ENCODE measurements at regions of chr3 and their contacts with region 1.

Region 1: DNA sequence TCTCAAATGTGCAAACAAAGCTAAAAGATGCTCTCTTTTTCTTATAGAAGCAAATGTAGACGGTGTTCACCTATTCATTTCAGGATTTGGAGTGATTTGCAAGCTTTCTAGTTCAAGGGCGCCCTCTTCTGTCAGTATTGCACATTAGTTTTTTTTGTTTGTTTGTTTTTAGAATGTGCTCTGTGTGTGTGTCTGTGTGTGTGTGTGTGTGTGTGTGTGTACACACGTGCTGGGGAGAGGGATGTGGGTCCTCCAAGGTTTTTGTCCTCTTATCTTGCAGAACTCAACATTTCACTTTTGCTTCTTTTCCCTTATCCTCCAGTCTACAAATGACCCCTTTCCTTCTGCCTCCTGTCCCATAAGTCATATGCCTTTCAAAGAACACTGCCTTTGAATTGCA is 23.5 kb downstream of the DNAH1 start:
- DNase-seq: peak; percentile 38 to 77 (median 41)
- ATAC-seq: peak; percentile 64
- H3K4me3 ChIP-seq: no peak overlapping the region
- H3K27ac ChIP-seq: no peak overlapping the region
- H3K4me1 ChIP-seq: no peaks in the 10 kb centered on the region
- H3K27me3 ChIP-seq: no peaks in the 10 kb centered on the region
- CTCF ChIP-seq: peak; percentile 56 to 79 (median 66); a peak in 5 of 6 replicates
- EP300 ChIP-seq: no peak
- POLR2A ChIP-seq: no peak
- RAD21 ChIP-seq: peak; percentile 93 to 95

Region 2: GRCh38 chr3:52231502-52232293 is 107.9 kb before region 1 on chr3:
- CTCF ChIA-PET with region 1: interaction called, 18 read pairs
- POLR2A ChIA-PET with region 1: interaction called, 5 read pairs
- in situ Hi-C with region 1: no loop called
- intact Hi-C with region 1: loop called (anchors 5 kb)
- DNase-seq: peak; percentile 64 to 72 (median 72)
- ATAC-seq: peak; percentile 82
- H3K4me3 ChIP-seq: no peak overlapping the region
- H3K27ac ChIP-seq: no peak overlapping the region
- H3K4me1 ChIP-seq: peaks cover 2 to 45% of the 10 kb centered on the region in 2 experiments; a peak in 4 of 5 replicates
- H3K27me3 ChIP-seq: no peaks in the 10 kb centered on the region
- CTCF ChIP-seq: peak; percentile 71 to 87 (median 77)
- EP300 ChIP-seq: no peak
- POLR2A ChIP-seq: no peak
- RAD21 ChIP-seq: peak; percentile 56 to 71

Region 3: DNA sequence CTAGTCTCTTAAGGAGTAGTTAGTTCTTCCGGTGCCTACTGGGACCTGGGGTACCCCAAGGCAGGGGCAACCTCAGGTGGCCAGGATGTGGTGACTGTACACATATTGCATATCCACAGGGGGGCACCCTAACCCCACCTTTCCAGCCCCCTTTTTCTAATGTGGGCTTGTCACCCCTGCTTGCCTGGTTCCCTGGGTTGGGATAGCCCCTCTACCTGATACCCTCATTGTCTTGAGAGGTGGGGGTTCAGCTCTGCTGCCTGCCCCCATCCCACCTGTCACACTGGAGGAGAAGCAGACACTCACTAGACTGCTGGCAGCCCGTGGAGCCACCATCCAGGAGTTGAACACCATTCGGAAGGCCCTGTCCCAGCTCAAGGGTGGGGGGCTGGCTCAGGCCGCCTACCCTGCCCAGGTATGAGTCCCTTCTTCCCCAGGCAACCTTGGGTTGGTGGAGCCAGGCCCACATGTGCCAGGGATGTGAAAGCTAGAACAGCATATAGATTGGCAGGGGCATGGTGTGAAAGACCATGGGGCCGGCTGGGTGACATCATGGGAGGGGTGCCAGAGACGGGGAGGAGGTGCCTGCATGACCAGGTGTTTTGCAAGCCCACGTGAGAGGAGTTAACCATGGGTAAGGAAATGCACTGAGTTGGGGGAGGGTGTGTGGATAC is 48.0 kb before region 1 on chr3:
- CTCF ChIA-PET with region 1: interaction called, 36 read pairs
- POLR2A ChIA-PET with region 1: interaction called, 3 read pairs
- in situ Hi-C with region 1: loop called (anchors 5 kb)
- intact Hi-C with region 1: loop called (anchors 1 kb)
- DNase-seq: peak in 2 of 4 experiments; percentile 52 to 57
- ATAC-seq: peak; percentile 48
- H3K4me3 ChIP-seq: no peak overlapping the region
- H3K27ac ChIP-seq: no peak overlapping the region
- H3K4me1 ChIP-seq: peaks cover 12 to 26% of the 10 kb centered on the region in 2 experiments; a peak in 4 of 5 replicates
- H3K27me3 ChIP-seq: no peaks in the 10 kb centered on the region
- CTCF ChIP-seq: peak; percentile 60 to 77 (median 77)
- EP300 ChIP-seq: no peak
- POLR2A ChIP-seq: no peak
- RAD21 ChIP-seq: peak; percentile 80 to 87

Region 4: GRCh38 chr3:53114011-53114400 is 774.4 kb after region 1 on chr3:
- CTCF ChIA-PET with region 1: no interaction called
- POLR2A ChIA-PET with region 1: no interaction called
- in situ Hi-C with region 1: no loop called
- intact Hi-C with region 1: no loop called
- DNase-seq: peak; percentile 75 to 81 (median 77)
- ATAC-seq: peak; percentile 94
- H3K4me3 ChIP-seq: no peak overlapping the region
- H3K27ac ChIP-seq: no peak overlapping the region
- H3K4me1 ChIP-seq: peaks cover 0 to 16% of the 10 kb centered on the region in 2 experiments; a peak in 3 of 5 replicates
- H3K27me3 ChIP-seq: no peaks in the 10 kb centered on the region
- CTCF ChIP-seq: peak; percentile 82 to 90 (median 83)
- EP300 ChIP-seq: no peak
- POLR2A ChIP-seq: no peak
- RAD21 ChIP-seq: peak; percentile 79 to 85